ENCODE measurements at regions of chr14 and their contacts with region 1.

Region 1: DNA sequence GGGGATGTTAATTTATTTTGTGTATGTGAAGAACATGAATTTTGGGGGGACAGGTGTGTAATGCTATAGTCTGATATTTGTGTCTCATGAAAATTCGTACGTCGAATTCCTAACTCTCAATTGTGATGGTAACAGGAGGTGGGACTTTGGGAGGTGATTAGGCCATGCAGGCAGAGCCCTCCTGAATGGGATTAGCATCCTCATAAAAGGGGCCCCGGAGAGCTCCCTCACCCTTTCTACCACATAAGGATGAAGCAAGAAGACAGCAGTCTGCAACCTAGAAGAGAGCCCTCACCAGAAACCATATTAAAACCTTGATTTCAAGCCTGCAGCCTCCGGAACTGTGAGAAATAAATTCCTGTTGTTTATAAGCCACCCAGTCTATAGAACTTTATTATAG is 165.4 kb downstream of the MDGA2 start:
- DNase-seq: no peak
- H3K4me3 ChIP-seq: no peak overlapping the region
- H3K27ac ChIP-seq: no peak overlapping the region
- H3K4me1 ChIP-seq: no peaks in the 10 kb centered on the region
- H3K27me3 ChIP-seq: no peaks in the 10 kb centered on the region
- CTCF ChIP-seq: no peak

Region 2: DNA sequence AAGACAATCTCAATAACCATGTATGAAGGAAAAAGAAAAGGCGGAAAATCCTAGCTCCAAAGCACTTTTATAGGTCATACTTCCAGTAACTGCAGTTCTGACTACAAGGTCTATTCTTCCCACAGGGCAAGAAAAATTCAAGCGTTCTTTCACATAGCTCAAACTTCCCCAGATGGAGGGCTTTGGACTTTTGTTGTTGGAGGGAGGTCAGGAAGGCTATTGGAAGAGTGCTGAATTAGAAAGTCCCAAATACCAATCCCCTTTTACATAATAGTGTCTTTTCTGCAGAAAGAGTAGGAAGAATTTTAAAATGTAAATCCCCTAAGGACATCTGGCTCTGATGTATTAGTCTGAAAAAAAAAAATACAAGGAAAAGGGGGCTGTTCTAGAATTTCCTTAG is 144.0 kb before region 1 on chr14:
- CTCF ChIA-PET with region 1: no interaction called
- POLR2A ChIA-PET with region 1: no interaction called
- intact Hi-C with region 1: no loop called
- DNase-seq: no peak
- H3K4me3 ChIP-seq: no peak overlapping the region
- H3K27ac ChIP-seq: no peak overlapping the region
- H3K4me1 ChIP-seq: no peaks in the 10 kb centered on the region
- H3K27me3 ChIP-seq: no peaks in the 10 kb centered on the region
- CTCF ChIP-seq: no peak

Region 3: GRCh38 chr14:47541662-47542061 is 31.7 kb after region 1 on chr14:
- CTCF ChIA-PET with region 1: no interaction called
- POLR2A ChIA-PET with region 1: no interaction called
- intact Hi-C with region 1: no loop called
- DNase-seq: no peak
- H3K4me3 ChIP-seq: no peak overlapping the region
- H3K27ac ChIP-seq: no peak overlapping the region
- H3K4me1 ChIP-seq: no peaks in the 10 kb centered on the region
- H3K27me3 ChIP-seq: no peaks in the 10 kb centered on the region
- CTCF ChIP-seq: no peak

Region 4: GRCh38 chr14:48747561-48748089 is 1237.7 kb after region 1 on chr14:
- CTCF ChIA-PET with region 1: no interaction called
- POLR2A ChIA-PET with region 1: interaction called, 10 read pairs
- intact Hi-C with region 1: no loop called
- DNase-seq: no peak
- H3K4me3 ChIP-seq: no peak overlapping the region
- H3K27ac ChIP-seq: no peak overlapping the region
- H3K4me1 ChIP-seq: no peaks in the 10 kb centered on the region
- H3K27me3 ChIP-seq: no peaks in the 10 kb centered on the region
- CTCF ChIP-seq: no peak

Measured in PC-9 (cell line).